Esophagus muscularis mucosa (tissue), 4 donors: ENCODE measurements at regions of chr11 and their contacts with region 1.

Region 1: DNA sequence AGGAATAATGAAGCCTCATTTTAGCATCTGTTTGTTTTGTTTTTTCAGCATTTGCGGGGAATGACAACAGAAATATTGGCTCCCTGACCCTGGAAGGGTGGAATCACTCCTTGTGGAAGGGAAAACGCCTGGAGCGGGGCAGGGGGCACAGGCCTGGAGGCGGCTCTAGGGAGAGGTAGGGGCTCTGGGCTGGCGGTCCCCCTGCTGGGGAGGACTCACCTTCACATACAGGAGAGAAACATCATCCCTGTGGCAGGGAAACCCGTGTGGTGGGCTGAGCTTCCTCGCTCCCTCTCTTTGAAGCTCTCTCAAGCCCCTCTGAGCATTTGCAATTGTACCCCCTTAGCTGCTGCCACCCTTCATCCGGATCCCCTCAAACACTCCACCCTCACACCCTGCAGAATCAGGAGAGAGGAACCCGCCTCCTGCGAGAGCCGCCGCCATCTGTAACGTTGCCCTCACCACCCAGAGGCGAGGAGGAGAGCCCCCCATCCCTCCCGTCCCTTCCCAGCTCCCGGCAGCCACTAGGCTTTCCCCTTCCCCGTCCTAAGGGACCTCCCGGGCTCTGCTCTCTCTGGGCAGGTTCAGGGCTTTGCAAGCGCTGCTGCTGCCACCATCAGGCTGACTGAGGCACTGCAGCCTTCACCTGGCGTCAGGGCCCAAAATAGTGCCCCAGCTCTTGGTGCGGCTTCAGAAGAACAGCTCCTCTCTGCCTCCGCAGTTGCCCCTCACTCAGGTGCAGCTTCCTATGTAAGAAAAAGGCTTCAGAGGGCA is 10.4 kb downstream of the KIRREL3 start:
- DNase-seq: no peak
- H3K4me3 ChIP-seq: no peak overlapping the region
- H3K27ac ChIP-seq: no peak overlapping the region
- H3K4me1 ChIP-seq: peaks cover 0 to 8% (median 7%) of the 10 kb centered on the region in 4 donors
- H3K27me3 ChIP-seq: peaks cover 0 to 29% (median 0%) of the 10 kb centered on the region in 4 donors
- CTCF ChIP-seq: peak; percentile 72 to 88 (median 81)
- EP300 ChIP-seq: no peak
- POLR2A ChIP-seq: no peak

Region 2: GRCh38 chr11:126310228-126310991 is 679.7 kb before region 1 on chr11:
- intact Hi-C with region 1: loop called (anchors 10 kb)
- DNase-seq: peak; percentile 95
- H3K4me3 ChIP-seq: no peak overlapping the region
- H3K27ac ChIP-seq: peak overlapping the region in 1 of 4 donors; percentile 8
- H3K4me1 ChIP-seq: peaks cover 8 to 20% (median 17%) of the 10 kb centered on the region in 4 donors
- H3K27me3 ChIP-seq: no peaks in the 10 kb centered on the region
- CTCF ChIP-seq: peak; percentile 86 to 93 (median 88)
- EP300 ChIP-seq: no peak
- POLR2A ChIP-seq: no peak

Region 3: GRCh38 chr11:126440792-126441514 is 549.2 kb before region 1 on chr11:
- intact Hi-C with region 1: loop called (anchors 2 kb)
- DNase-seq: peak; percentile 95
- H3K4me3 ChIP-seq: no peak overlapping the region
- H3K27ac ChIP-seq: no peak overlapping the region
- H3K4me1 ChIP-seq: peaks cover 3 to 12% (median 8%) of the 10 kb centered on the region in 4 donors
- H3K27me3 ChIP-seq: peaks cover 0 to 8% (median 0%) of the 10 kb centered on the region in 4 donors
- CTCF ChIP-seq: peak; percentile 92 to 98 (median 95)
- EP300 ChIP-seq: no peak
- POLR2A ChIP-seq: no peak

Region 4: DNA sequence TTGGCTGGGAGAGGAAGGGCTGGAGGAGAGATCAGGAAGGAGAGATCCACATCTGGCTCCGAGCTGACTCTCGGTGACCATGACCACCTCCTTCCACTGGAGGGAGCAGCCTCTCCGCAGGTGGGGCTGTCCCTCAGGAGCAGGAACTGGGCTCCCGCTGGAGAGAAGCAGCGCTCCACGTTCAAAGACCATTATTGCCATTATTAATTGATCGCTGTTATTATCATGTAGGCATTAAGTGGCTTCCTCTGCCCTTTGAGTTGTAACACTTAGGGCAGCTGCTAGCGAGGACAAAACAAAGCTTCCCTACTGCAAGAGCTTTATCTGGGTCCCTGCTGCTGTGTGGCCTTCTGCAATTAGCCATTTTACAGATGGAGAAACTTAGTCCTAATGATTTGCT is 382.8 kb before region 1 on chr11:
- intact Hi-C with region 1: loop called (anchors 10 kb)
- DNase-seq: no peak
- H3K4me3 ChIP-seq: no peak overlapping the region
- H3K27ac ChIP-seq: no peak overlapping the region
- H3K4me1 ChIP-seq: peaks cover 0 to 7% (median 2%) of the 10 kb centered on the region in 4 donors
- H3K27me3 ChIP-seq: peaks cover 0 to 72% (median 0%) of the 10 kb centered on the region in 4 donors
- CTCF ChIP-seq: peak; percentile 35 to 56 (median 35)
- EP300 ChIP-seq: no peak
- POLR2A ChIP-seq: no peak

Region 5: GRCh38 chr11:126716456-126717083 is 273.6 kb before region 1 on chr11:
- intact Hi-C with region 1: loop called (anchors 2 kb)
- DNase-seq: no peak
- H3K4me3 ChIP-seq: no peak overlapping the region
- H3K27ac ChIP-seq: no peak overlapping the region
- H3K4me1 ChIP-seq: no peaks in the 10 kb centered on the region
- H3K27me3 ChIP-seq: peaks cover 0 to 28% (median 2%) of the 10 kb centered on the region in 4 donors
- CTCF ChIP-seq: peak; percentile 14 to 47 (median 38)
- EP300 ChIP-seq: no peak
- POLR2A ChIP-seq: no peak

Region 6: DNA sequence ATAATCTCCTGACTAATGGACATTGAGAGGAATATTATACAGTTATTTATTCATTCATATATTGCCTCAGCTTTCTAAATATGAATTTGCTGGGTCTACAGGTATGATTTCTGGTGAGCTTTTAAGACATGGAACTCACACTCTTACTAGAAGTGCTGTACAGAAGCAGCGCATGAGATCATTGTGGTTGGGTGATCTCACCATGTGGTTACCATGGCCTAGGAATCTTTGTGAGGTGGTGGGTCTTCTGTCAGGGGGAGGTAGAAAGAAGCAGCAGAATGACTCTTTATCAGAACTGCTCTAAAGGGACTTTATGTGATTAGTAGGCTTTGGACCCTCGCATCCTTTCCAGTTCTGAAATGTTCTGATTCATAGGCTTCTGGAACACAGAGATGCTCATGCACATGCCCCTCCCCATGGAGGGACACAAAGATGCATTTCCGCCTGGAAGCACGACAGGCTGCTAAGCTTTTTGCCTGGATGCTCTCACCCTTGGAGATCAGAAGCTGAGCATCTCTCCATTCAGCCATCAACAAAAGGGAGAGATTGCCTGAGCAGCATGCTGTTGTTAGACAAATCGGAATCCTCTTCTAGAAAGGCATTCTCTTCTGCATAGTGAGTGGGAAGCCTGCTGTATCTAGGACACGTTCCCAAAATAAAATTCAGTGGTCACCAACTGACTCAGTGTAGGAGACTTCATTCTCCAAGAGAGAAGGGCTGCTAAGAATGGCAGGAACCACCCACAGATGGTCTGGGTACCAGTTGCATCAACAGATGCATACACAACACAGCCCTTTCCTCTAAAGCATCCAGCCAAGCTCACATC is 40.9 kb before region 1 on chr11:
- intact Hi-C with region 1: no loop called
- DNase-seq: no peak
- H3K4me3 ChIP-seq: no peak overlapping the region
- H3K27ac ChIP-seq: no peak overlapping the region
- H3K4me1 ChIP-seq: no peaks in the 10 kb centered on the region
- H3K27me3 ChIP-seq: no peaks in the 10 kb centered on the region
- CTCF ChIP-seq: no peak
- EP300 ChIP-seq: no peak
- POLR2A ChIP-seq: no peak